ENCODE measurements at regions of chr19 and their contacts with region 1.

Region 1: GRCh38 chr19:55319785-55320184 is 5.4 kb downstream of the TMEM150B start:
- DNase-seq: no peak
- H3K4me3 ChIP-seq: peak overlapping the region in 2 of 7 experiments; percentile 24 to 64
- H3K27ac ChIP-seq: no peak overlapping the region
- H3K4me1 ChIP-seq: peaks cover 0 to 38% (median 32%) of the 10 kb centered on the region in 4 experiments
- H3K27me3 ChIP-seq: no peaks in the 10 kb centered on the region

Region 2: DNA sequence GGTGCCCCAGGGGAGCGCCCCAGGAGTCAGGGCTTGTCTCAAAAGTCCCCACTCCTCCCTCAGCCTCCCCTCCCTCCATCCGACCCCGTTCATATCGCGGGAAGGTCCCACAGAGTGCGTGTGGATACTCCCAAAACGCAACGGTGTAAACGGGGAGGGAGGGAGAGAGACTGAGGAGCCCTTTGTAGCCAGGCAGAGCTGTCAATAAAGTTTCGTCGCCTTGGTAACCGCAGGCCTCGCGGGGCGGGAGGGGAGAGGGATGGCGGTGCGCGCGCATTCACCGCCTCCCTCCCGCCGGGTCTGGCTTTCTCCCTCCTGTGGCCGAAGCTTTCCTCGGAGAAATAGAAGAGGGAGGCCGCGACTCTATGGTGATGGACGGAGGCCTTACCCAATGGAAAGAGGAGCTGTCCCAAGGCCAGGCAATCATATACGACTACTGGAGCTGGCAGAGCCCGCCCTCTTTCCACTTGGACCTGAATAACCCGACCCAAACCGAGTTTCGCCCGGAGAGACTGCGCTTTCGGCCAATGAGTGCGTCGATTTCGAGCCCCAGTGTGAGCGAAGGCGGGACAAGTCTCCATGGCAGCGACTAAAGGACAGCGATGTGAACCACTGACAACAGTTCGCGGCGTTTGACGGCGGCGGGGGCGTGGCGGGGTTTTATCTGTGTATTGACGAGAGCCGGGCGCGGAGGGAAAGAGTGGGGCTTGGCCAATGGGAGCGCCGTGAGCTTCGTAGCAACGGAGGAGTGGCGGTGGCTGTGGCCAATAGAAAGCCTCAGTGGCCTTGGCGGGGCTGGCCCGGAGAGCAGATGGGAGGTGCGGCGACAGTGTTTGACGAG is 19.5 kb after region 1 on chr19 and contains the start of gene KMT5C:
- CTCF ChIA-PET with region 1: interaction called, 11 read pairs
- POLR2A ChIA-PET with region 1: interaction called, 9 read pairs
- DNase-seq: peak; percentile 100
- H3K4me3 ChIP-seq: peak within 1 kb of the TSS; percentile 55 to 85 (median 81)
- H3K27ac ChIP-seq: peak within 1 kb of the TSS; percentile 99 to 100
- H3K4me1 ChIP-seq: peaks cover 0 to 27% (median 25%) of the 10 kb centered on the region in 4 experiments
- H3K27me3 ChIP-seq: no peaks in the 10 kb centered on the region